ENCODE measurements at regions of chr4 and their contacts with region 1.

Region 1: GRCh38 chr4:73069338-73070073 is at the start of gene COX18:
- DNase-seq: peak; percentile 97
- H3K4me3 Mint-ChIP-seq: peak within 1 kb of the TSS; percentile 72
- H3K27ac Mint-ChIP-seq: peak within 1 kb of the TSS; percentile 93
- H3K4me1 Mint-ChIP-seq: peaks cover 24% of the 10 kb centered on the region
- H3K27me3 Mint-ChIP-seq: no peaks in the 10 kb centered on the region
- total RNA-seq, gene COX18: 20.9 to 21.1 TPM

Region 2: DNA sequence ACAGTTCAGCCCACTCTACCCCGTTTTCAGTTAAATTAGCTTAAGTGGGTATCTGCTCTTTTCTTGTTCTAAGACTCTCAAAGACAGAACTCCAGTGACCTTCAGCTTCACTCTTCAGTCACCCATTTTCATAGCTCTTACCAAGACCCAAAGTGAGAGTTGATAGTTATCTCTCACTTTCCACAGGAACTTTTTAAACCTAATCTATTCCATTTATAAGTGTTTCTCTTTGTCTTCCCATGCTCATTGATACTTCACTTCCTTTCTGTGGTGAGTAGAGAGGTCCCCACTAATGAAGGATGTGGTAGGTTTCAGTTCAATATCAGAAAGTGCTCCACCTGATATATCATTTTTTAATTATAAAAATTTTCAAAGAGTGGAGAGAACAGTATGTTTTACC is 33.4 kb before region 1 on chr4:
- CTCF ChIA-PET with region 1: interaction called, 4 read pairs
- intact Hi-C with region 1: loop called (anchors 1 kb)
- DNase-seq: no peak
- H3K4me3 Mint-ChIP-seq: no peak overlapping the region
- H3K27ac Mint-ChIP-seq: no peak overlapping the region
- H3K4me1 Mint-ChIP-seq: peaks cover 13% of the 10 kb centered on the region
- H3K27me3 Mint-ChIP-seq: peaks cover 2% of the 10 kb centered on the region

Region 3: GRCh38 chr4:73055241-73055897 is 14.1 kb before region 1 on chr4:
- CTCF ChIA-PET with region 1: interaction called, 4 read pairs
- intact Hi-C with region 1: loop called (anchors 1 kb)
- DNase-seq: no peak
- H3K4me3 Mint-ChIP-seq: no peak overlapping the region
- H3K27ac Mint-ChIP-seq: peak overlapping the region; percentile 56
- H3K4me1 Mint-ChIP-seq: peaks cover 22% of the 10 kb centered on the region
- H3K27me3 Mint-ChIP-seq: no peaks in the 10 kb centered on the region

Region 4: DNA sequence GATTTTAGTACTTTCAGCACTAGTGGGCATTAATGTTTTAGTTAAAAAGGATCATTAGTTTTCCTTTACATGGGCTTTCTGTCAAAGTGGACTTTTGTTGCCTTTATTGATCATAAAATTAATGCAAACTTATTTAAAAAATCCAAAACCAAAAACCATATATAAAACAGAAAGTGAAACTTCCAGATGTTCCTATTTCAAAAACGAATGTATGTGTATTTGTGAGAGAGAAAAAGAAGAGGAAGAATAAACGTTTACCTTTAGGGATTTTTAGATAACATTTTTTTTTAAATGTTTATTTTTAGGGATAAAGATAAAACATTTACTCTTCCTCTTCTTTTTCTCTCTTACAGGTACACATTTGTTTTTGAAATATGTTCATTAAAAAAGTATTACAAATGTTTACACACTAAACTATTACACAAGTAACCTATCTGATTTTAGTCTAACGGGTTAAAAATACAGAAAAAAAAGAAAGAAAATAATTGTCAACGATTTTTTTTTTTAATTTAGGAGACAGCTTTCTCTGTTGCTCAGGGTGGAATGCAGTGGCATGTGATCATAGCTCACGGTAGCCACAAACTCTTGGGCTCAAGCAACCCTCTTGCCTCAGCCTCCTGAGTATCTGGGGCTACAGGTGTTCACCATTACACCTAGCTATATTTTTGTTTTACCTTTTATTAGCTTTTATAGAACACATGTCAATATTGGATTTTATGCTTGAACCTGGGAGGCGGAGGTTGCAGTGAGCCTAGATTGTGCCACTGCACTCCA is 16.8 kb after region 1 on chr4:
- CTCF ChIA-PET with region 1: no interaction called
- intact Hi-C with region 1: loop called (anchors 1 kb)
- DNase-seq: no peak
- H3K4me3 Mint-ChIP-seq: peak overlapping the region; percentile 36
- H3K27ac Mint-ChIP-seq: no peak overlapping the region
- H3K4me1 Mint-ChIP-seq: peaks cover 17% of the 10 kb centered on the region
- H3K27me3 Mint-ChIP-seq: no peaks in the 10 kb centered on the region

Region 5: GRCh38 chr4:73109493-73109892 is 40.0 kb after region 1 on chr4:
- CTCF ChIA-PET with region 1: no interaction called
- intact Hi-C with region 1: loop called (anchors 1 kb)
- DNase-seq: no peak
- H3K4me3 Mint-ChIP-seq: no peak overlapping the region
- H3K27ac Mint-ChIP-seq: no peak overlapping the region
- H3K4me1 Mint-ChIP-seq: peaks cover 18% of the 10 kb centered on the region
- H3K27me3 Mint-ChIP-seq: no peaks in the 10 kb centered on the region

Region 6: DNA sequence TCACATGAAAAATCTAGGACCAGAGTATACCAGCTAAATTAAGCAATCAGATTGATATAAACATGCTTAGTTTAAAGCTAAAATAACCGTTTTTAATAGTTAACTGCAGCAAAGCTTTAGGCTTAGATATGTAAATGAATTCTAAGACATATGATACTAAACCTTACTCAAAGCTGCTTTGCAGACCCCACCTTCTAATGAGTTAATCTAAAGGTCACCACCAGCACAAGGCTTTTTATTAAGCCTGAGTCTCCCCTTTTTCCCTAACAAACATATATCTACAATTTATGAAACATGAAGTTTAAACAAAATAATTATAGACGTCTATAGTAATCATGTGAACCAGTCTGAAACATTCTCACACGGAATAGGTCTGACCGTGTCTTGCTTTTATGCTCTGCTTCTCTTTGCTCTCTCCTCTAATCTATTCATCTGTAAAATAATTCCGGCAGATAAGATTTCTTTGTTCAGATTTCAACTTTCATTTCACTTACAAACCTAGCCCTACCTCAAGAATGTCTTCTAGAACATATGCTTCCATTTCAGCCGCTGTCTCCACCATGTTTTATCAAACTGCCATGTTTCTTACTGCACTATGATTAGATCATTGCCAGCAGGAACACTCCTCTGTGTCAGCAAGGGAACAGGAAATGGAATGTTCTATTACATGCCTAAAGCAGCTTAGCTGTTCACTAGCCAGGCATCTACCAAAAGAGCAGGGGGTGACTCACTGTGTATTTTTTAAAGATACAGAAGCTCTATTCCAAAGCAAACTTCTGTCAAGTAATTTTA is 153.2 kb after region 1 on chr4:
- CTCF ChIA-PET with region 1: no interaction called
- intact Hi-C with region 1: loop called (anchors 1 kb)
- DNase-seq: peak; percentile 75
- H3K4me3 Mint-ChIP-seq: no peak overlapping the region
- H3K27ac Mint-ChIP-seq: no peak overlapping the region
- H3K4me1 Mint-ChIP-seq: peaks cover 36% of the 10 kb centered on the region
- H3K27me3 Mint-ChIP-seq: no peaks in the 10 kb centered on the region

Region 7: GRCh38 chr4:73533515-73534422 is 464.3 kb after region 1 on chr4:
- CTCF ChIA-PET with region 1: no interaction called
- intact Hi-C with region 1: loop called (anchors 2 kb)
- DNase-seq: no peak
- H3K4me3 Mint-ChIP-seq: no peak overlapping the region
- H3K27ac Mint-ChIP-seq: no peak overlapping the region
- H3K4me1 Mint-ChIP-seq: peaks cover 1% of the 10 kb centered on the region
- H3K27me3 Mint-ChIP-seq: peaks cover 3% of the 10 kb centered on the region